Panc1 (cell line): ENCODE measurements at regions of chr2 and their contacts with region 1.

Region 1: DNA sequence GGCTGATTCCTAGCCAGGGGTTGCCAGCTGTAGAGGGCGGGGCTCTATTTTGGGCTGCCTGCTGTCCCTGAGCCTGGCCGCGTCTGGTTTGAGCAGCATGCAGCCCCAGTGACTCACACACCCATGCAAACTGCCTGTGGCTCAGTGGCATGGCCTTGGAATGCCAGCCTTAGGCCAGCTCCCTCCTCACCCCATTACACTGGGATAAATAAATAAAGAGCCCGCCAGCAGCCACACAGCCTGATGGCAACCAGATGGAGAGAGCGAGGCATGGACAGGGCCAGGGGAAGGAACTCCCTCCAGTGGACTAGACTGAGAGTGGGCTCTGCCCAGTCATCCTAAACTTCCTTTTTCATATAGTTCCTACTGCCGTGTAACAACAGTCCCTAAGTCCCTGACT is 18.3 kb downstream of the NHEJ1 start:
- DNase-seq: no peak
- ATAC-seq: peak; percentile 34; the same call in 1 of the 2 replicates
- H3K4me3 ChIP-seq: no peak overlapping the region
- H3K27ac ChIP-seq: no peak overlapping the region
- H3K4me1 ChIP-seq: no peaks in the 10 kb centered on the region
- H3K27me3 ChIP-seq: no peaks in the 10 kb centered on the region
- CTCF ChIP-seq: no peak

Region 2: GRCh38 chr2:218618102-218618860 is 524.0 kb before region 1 on chr2:
- CTCF ChIA-PET with region 1: no interaction called
- POLR2A ChIA-PET with region 1: interaction called, 10 read pairs
- in situ Hi-C with region 1: no loop called
- intact Hi-C with region 1: no loop called
- DNase-seq: no peak
- ATAC-seq: peak; percentile 85
- H3K4me3 ChIP-seq: no peak overlapping the region
- H3K27ac ChIP-seq: no peak overlapping the region
- H3K4me1 ChIP-seq: no peaks in the 10 kb centered on the region
- H3K27me3 ChIP-seq: no peaks in the 10 kb centered on the region
- CTCF ChIP-seq: peak; percentile 65; the same call in 1 of the 2 replicates

Region 3: GRCh38 chr2:219041252-219041651 is 101.1 kb before region 1 on chr2 and contains the start of gene CFAP65:
- CTCF ChIA-PET with region 1: no interaction called
- POLR2A ChIA-PET with region 1: interaction called, 10 read pairs
- in situ Hi-C with region 1: no loop called
- intact Hi-C with region 1: no loop called
- DNase-seq: peak; percentile 10
- ATAC-seq: peak; percentile 88
- H3K4me3 ChIP-seq: peak within 1 kb of the TSS; percentile 69 to 78
- H3K27ac ChIP-seq: no peak within 1 kb of the TSS
- H3K4me1 ChIP-seq: no peaks in the 10 kb centered on the region
- H3K27me3 ChIP-seq: peaks cover 19% of the 10 kb centered on the region
- CTCF ChIP-seq: no peak
- total RNA-seq, gene CFAP65: 0.33 TPM

Region 4: GRCh38 chr2:219186754-219187456 is 44.6 kb after region 1 on chr2:
- CTCF ChIA-PET with region 1: no interaction called
- POLR2A ChIA-PET with region 1: no interaction called
- in situ Hi-C with region 1: no loop called
- intact Hi-C with region 1: no loop called
- DNase-seq: no peak
- ATAC-seq: peak; percentile 33
- H3K4me3 ChIP-seq: no peak overlapping the region
- H3K27ac ChIP-seq: no peak overlapping the region
- H3K4me1 ChIP-seq: no peaks in the 10 kb centered on the region
- H3K27me3 ChIP-seq: no peaks in the 10 kb centered on the region
- CTCF ChIP-seq: no peak